ENCODE measurements at regions of chr12 and their contacts with region 1.

Region 1: GRCh38 chr12:114655934-114656749 is 27.8 kb downstream of the TBX3 start:
- DNase-seq: no peak
- H3K4me3 ChIP-seq: no peak overlapping the region
- H3K27ac ChIP-seq: no peak overlapping the region
- H3K4me1 ChIP-seq: no peaks in the 10 kb centered on the region
- H3K27me3 ChIP-seq: no peaks in the 10 kb centered on the region
- CTCF ChIP-seq: no peak
- POLR2A ChIP-seq: no peak

Region 2: DNA sequence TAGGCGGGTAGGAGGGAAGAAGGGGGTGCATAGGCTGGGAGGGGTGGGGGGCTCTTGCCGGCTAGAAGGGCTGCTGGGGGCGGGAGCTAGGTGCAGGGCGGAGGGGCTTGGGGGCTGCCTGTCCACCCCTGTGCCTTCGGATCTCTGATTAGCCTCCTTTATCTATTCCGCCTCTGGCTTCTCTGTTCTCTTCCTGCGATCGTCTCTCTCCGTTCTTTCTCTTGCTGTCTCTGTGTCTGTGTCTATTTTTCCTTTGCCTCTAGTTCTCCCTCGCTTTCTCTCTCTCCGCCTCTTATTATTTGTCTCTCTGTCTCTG is 1017.7 kb before region 1 on chr12:
- intact Hi-C with region 1: no loop called
- DNase-seq: no peak
- H3K4me3 ChIP-seq: no peak overlapping the region
- H3K27ac ChIP-seq: no peak overlapping the region
- H3K4me1 ChIP-seq: peaks cover 5% of the 10 kb centered on the region
- H3K27me3 ChIP-seq: no peaks in the 10 kb centered on the region
- CTCF ChIP-seq: no peak
- POLR2A ChIP-seq: no peak

Region 3: DNA sequence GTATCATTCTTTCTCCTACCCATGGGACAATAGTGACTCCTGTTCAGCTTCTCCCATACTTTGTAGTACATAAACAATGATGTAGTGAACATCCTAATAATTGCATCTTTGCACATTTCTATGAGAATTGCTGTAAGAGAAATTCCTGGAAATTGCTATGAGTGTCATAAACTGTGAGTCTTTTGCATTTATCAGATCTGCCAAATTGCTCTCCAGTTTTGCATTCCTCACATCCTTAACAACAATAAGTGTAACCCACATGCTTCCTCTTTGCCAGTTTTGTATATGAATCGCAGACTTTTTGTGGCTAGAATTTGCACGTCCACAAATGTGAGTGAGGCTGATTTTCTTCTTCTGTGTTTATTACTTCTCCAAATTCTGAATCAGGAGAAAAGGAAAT is 126.2 kb before region 1 on chr12:
- intact Hi-C with region 1: no loop called
- DNase-seq: no peak
- H3K4me3 ChIP-seq: no peak overlapping the region
- H3K27ac ChIP-seq: no peak overlapping the region
- H3K4me1 ChIP-seq: no peaks in the 10 kb centered on the region
- H3K27me3 ChIP-seq: no peaks in the 10 kb centered on the region
- CTCF ChIP-seq: no peak
- POLR2A ChIP-seq: no peak

Region 4: DNA sequence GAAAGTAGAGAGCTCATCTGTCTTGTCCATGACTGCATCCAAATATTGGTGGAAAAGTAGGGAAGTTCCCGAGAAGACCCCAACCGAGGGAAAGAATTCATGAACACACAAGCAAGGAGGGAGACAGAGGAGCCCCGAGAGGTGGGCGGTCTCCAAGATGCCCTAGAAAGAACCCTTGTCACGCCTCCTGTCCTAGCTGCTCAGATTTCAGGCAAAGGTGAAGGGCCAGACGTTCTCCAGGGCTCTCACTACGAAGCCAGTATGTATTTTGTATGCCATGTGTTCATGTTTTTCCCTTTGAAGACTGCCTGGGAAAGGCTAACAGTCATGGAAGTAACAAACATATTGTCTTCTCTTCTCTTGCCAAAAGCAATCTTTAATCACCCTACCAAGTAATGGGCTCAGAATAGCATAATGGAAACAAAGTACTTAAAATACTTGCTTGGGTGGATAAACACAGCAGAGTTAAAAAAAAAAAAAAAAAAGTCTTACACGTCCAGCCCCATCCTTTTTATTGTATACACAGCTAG is 127.0 kb after region 1 on chr12:
- intact Hi-C with region 1: no loop called
- DNase-seq: no peak
- H3K4me3 ChIP-seq: no peak overlapping the region
- H3K27ac ChIP-seq: no peak overlapping the region
- H3K4me1 ChIP-seq: no peaks in the 10 kb centered on the region
- H3K27me3 ChIP-seq: no peaks in the 10 kb centered on the region
- CTCF ChIP-seq: no peak
- POLR2A ChIP-seq: no peak

Region 5: GRCh38 chr12:115916910-115917668 is 1260.9 kb after region 1 on chr12:
- intact Hi-C with region 1: loop called (anchors 5 kb)
- DNase-seq: no peak
- H3K4me3 ChIP-seq: peak overlapping the region; percentile 30 to 40
- H3K27ac ChIP-seq: no peak overlapping the region
- H3K4me1 ChIP-seq: peaks cover 7% of the 10 kb centered on the region
- H3K27me3 ChIP-seq: no peaks in the 10 kb centered on the region
- CTCF ChIP-seq: peak; percentile 93 to 99 (median 95)
- POLR2A ChIP-seq: no peak

Measured in vagina (tissue), 2 donors.